IMR-90 (cell line): ENCODE measurements at regions of chr19 and their contacts with region 1.

Region 1: GRCh38 chr19:984165-984967 is at the start of gene WDR18:
- DNase-seq: peak; percentile 81
- ATAC-seq: peak; percentile 89
- H3K4me3 ChIP-seq: peak within 1 kb of the TSS; percentile 81
- H3K27ac ChIP-seq: peak within 1 kb of the TSS; percentile 96
- H3K4me1 ChIP-seq: peaks cover 13% of the 10 kb centered on the region
- H3K27me3 ChIP-seq: no peaks in the 10 kb centered on the region
- CTCF ChIP-seq: peak; percentile 30
- POLR2A ChIP-seq: peak; percentile 81
- RAD21 ChIP-seq: no peak
- total RNA-seq, gene WDR18: 37.1 and 38.9 TPM in 2 replicates

Region 2: GRCh38 chr19:771332-771785 is 213.0 kb before region 1 on chr19:
- CTCF ChIA-PET with region 1: no interaction called
- POLR2A ChIA-PET with region 1: no interaction called
- dilution Hi-C with region 1: no loop called
- in situ Hi-C with region 1: loop called (anchors 10 kb)
- intact Hi-C with region 1: loop called (anchors 5 kb)
- DNase-seq: peak; percentile 43
- ATAC-seq: no peak
- H3K4me3 ChIP-seq: no peak overlapping the region
- H3K27ac ChIP-seq: no peak overlapping the region
- H3K4me1 ChIP-seq: no peaks in the 10 kb centered on the region; the same call in 1 of the 2 replicates
- H3K27me3 ChIP-seq: no peaks in the 10 kb centered on the region
- CTCF ChIP-seq: peak; percentile 57
- POLR2A ChIP-seq: no peak
- RAD21 ChIP-seq: peak; percentile 47

Region 3: DNA sequence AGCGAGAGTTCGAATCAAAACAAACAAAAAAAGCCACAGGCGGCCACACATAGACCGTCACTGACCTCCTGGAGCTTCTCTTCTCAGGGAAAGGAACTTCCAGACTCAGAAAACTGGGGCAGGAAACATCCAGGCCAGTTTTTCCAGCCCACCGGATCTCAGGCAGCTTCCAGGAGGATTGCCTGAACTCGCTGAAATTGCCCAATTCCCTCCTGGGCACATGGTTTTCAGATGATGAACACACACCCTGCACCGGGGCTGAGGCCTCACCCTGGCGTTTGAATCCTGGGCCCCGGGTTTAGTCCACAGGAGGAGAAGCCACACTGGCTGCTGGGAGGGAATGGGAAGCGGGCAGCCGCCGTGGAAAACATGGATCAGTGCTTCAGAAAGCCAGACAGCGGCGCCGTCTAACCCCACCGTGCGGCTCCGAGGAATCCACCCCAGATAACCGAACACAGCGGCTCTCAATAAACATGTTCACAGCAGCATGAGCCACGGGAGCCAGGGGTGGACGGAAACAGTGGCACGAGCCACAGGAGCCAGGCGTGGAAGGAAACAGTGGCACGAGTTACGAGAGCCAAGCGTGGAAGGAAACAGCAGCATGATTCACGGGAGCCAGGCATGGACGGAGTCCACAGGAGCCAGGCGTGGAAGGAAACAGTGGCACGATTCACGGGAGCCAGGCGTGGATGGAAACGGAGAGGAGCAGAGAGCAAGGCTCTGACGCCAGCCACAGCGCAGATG is 205.3 kb before region 1 on chr19:
- CTCF ChIA-PET with region 1: no interaction called
- POLR2A ChIA-PET with region 1: no interaction called
- dilution Hi-C with region 1: no loop called
- in situ Hi-C with region 1: no loop called
- intact Hi-C with region 1: loop called (anchors 5 kb)
- DNase-seq: peak; percentile 94
- ATAC-seq: peak; percentile 85
- H3K4me3 ChIP-seq: no peak overlapping the region
- H3K27ac ChIP-seq: peak overlapping the region; percentile 83
- H3K4me1 ChIP-seq: peaks cover 19% of the 10 kb centered on the region
- H3K27me3 ChIP-seq: no peaks in the 10 kb centered on the region
- CTCF ChIP-seq: no peak
- POLR2A ChIP-seq: no peak
- RAD21 ChIP-seq: no peak

Region 4: DNA sequence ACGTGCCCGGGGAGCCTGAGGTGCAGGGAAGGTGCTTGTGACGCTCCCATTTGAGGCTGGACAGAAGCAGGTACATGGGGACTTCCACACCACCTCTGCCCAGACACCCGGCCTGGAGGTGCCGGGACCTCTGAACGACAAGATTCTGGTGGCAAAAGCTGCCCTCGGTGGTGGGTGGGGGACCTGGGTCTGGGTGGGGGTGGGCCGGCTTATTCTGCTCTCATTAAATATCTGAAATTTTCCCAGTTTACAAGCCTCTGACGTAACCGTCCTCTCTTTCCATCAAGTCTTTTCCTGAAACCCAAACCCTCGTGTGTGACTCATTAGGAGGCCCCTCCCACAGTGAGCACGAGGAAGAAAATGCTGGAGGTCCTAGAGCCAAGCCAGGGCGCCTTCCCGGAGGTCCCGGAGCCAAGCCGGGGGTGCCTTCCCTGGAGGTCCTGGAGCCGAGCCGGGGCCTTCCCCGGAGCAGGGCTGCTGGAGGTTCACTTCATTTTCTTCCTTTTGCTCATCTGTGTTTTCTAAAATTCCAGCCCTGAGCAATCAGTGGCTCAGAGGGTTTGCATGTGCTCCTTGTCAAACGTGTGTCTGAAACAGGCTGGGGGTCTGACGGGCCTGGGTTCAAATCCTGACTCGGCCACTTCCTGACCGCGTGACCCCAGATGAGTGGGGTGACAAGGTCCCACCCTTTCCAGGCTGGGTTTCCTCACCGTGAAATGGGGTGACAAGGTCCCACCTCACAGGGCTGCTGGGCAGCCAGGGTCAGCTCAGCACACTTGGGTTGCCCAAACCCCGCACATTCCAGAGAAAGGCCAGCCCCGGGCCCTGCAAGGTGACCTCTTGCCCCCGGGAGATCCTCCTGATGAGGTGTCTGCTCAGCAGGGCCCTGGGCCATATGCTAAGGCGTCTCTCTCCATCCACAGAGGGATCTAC is 114.9 kb before region 1 on chr19:
- CTCF ChIA-PET with region 1: no interaction called
- POLR2A ChIA-PET with region 1: no interaction called
- dilution Hi-C with region 1: no loop called
- in situ Hi-C with region 1: no loop called
- intact Hi-C with region 1: loop called (anchors 5 kb)
- DNase-seq: peak; percentile 96
- ATAC-seq: peak; percentile 81
- H3K4me3 ChIP-seq: no peak overlapping the region
- H3K27ac ChIP-seq: peak overlapping the region; percentile 73
- H3K4me1 ChIP-seq: peaks cover 22% of the 10 kb centered on the region
- H3K27me3 ChIP-seq: no peaks in the 10 kb centered on the region
- CTCF ChIP-seq: no peak
- POLR2A ChIP-seq: no peak
- RAD21 ChIP-seq: no peak